ENCODE measurements at regions of chr6 and their contacts with region 1.

Region 1: GRCh38 chr6:42845327-42845694 is 34.1 kb upstream of the RPL7L1 start:
- DNase-seq: no peak
- H3K4me3 ChIP-seq: no peak overlapping the region
- H3K27ac ChIP-seq: no peak overlapping the region
- H3K4me1 ChIP-seq: no peaks in the 10 kb centered on the region
- H3K27me3 ChIP-seq: no peaks in the 10 kb centered on the region
- CTCF ChIP-seq: no peak
- POLR2A ChIP-seq: no peak

Region 2: GRCh38 chr6:42831237-42831636 is 14.1 kb before region 1 on chr6:
- CTCF ChIA-PET with region 1: interaction called, 3 read pairs
- POLR2A ChIA-PET with region 1: interaction called, 11 read pairs
- dilution Hi-C with region 1: no loop called
- intact Hi-C with region 1: no loop called
- DNase-seq: no peak
- H3K4me3 ChIP-seq: no peak overlapping the region
- H3K27ac ChIP-seq: no peak overlapping the region
- H3K4me1 ChIP-seq: no peaks in the 10 kb centered on the region
- H3K27me3 ChIP-seq: no peaks in the 10 kb centered on the region
- CTCF ChIP-seq: no peak
- POLR2A ChIP-seq: no peak

Measured in endothelial cell of umbilical vein (primary cell).